ENCODE measurements at regions of chr6 and their contacts with region 1.

Region 1: DNA sequence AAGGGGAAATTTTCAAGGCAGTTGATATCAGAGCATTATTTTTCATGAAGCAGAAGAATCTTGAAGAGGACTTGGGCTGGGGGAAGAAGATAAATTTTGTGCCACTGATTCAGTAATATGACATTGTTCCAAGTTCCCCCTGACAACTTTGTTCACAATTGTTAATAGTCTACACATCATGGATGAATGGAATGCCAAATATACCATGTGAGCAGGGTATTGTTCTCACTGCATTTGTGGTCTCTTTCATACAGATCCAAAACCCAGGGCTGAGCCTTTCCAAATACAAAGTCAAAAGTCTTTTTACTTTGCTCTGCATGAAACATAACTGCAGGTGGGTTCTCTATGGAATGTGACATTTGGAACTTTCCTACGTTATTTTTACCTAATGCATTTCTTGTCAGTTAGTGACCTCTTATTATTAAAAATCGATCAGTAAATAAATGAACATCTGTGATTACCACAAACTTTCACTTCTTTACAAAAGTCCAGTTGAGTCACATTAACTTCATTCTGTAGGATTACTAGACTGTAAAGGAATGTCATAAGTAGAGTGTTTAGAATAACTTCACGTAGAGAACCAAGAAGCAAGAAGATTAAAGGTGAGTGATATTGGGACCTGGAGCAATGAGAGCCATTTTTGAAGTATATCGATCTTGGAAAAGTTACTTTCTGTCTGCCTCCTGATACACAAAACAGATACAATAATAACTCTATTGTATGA is 100.9 kb downstream of the RCAN2 start:
- DNase-seq: no peak
- ATAC-seq: no peak

Region 2: DNA sequence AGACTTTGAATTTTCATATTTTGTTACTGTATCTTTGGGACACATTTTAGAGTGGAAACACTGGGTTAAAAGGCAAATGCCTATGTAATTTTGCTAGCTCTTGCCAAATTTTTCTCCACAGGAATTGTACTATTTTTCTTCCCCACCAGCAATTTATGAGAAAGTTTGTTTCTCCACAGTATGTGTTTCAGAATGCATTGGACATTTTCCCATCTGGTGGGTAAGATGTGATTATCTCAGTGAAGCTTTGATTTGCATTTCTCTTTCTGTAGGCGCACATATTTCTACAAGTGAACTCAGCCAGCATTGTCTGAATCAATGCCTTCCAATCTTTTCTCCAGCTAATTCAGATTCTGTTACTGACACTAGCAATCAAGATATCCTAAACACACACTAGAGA is 56.8 kb before region 1 on chr6:
- intact Hi-C with region 1: loop called (anchors 1 kb)
- DNase-seq: no peak
- ATAC-seq: no peak

Region 3: GRCh38 chr6:46437671-46438221 is 47.4 kb after region 1 on chr6:
- intact Hi-C with region 1: no loop called
- DNase-seq: no peak
- ATAC-seq: no peak